Esophagus muscularis mucosa (tissue), 4 donors: ENCODE measurements at regions of chr3 and their contacts with region 1.

Region 1: DNA sequence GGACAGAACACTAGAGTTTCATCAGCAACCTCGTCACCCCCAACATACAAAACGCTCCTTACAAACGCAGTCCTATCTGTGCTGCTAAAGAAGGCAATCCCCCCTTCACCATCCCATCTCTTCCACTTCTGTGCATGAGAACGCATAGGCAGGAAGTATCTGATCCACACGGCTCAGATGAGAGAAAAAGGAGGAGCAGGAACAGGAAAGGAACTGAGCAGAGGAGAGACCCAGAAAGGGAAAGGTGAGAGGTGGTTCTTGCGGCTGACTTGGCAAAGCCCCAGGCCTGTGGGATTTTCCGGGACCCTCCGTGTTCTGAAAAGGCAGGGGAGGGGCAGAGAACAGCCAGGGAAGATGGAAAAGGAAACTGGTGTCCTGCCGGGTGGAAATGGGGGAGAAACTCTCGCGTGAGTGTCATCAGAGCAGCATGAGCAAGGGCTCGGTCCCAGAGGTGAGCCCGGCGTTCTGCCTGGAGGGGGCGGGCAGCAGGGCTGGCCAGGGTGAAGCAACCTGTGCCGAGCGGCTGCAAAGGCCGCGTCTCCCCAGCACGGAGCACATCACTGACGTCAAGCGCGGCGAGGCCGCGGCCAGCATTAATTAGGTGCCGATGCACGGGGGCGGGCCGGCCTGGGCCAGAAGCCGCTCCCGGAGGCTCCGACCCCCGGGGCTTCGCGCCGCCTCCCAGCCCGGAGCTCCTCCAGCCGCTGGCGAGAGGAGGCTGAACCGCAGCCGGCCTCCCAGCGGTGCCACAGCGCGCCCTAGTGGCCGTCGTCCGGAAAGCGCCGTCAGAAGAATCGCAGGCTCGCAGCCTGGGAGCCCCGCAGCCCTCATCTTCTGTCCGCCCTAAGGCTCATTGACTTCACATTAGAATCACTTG is 35.8 kb downstream of the CPN2 start:
- DNase-seq: peak; percentile 96
- H3K4me3 ChIP-seq: peak overlapping the region; percentile 50 to 62 (median 52)
- H3K27ac ChIP-seq: peak overlapping the region; percentile 39 to 76 (median 61)
- H3K4me1 ChIP-seq: peaks cover 30 to 63% (median 58%) of the 10 kb centered on the region in 4 donors
- H3K27me3 ChIP-seq: peaks cover 0 to 10% (median 0%) of the 10 kb centered on the region in 4 donors
- CTCF ChIP-seq: peak; percentile 91 to 97 (median 96)
- EP300 ChIP-seq: no peak
- POLR2A ChIP-seq: no peak

Region 2: GRCh38 chr3:193780810-193781472 is 534.4 kb before region 1 on chr3:
- intact Hi-C with region 1: loop called (anchors 2 kb)
- DNase-seq: no peak
- H3K4me3 ChIP-seq: no peak overlapping the region
- H3K27ac ChIP-seq: peak overlapping the region in 3 of 4 donors; percentile 34 to 49 (median 49)
- H3K4me1 ChIP-seq: peaks cover 8 to 15% (median 11%) of the 10 kb centered on the region in 4 donors
- H3K27me3 ChIP-seq: peaks cover 0 to 25% (median 0%) of the 10 kb centered on the region in 4 donors
- CTCF ChIP-seq: peak; percentile 79 to 86 (median 85)
- EP300 ChIP-seq: no peak
- POLR2A ChIP-seq: no peak

Region 3: DNA sequence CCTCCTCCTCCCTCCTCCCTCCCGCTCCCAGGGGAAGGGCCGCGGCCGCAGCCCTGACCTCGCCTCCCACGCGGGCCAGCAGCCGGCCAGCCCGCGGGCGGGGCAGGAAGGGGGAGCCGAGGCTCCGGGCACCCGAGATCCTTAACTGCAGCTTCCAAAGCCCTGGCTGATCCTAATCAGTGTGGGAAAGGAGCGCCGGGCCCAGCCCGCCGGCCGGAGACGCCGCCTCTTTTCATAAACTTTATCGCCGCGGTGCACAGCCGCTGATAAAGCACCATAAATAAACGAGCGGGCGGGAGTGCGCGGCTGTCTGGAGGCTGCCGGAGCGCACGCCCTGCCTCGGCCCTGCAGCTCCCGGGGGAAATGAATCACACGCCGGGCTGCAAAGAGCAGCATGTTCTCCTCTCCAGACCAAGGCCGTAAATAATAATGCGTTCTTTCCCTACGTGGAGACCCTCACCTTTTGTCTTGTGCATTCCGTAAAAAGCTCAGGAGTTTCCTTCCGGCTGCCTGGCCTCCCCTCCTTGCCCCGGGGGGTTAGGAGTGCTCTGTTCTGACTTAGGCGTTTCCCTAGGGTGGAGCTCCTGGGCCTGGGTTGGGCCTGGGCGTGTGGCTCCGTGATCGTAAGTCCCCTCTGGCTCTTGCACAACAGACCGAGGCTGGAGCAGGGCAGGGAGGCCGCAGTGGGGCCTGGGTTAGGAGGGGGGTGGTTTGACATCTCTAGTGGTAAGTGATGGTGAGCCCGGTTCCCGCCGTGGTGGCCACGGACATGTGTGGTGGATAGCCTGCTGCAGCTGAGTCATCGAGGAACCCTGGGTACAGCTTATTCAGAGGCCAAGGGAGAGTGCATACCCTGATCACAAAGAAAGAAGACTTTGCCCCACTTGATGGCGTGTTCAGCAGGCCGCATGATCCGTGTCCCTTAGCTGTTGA is 311.9 kb before region 1 on chr3:
- intact Hi-C with region 1: loop called (anchors 10 kb)
- DNase-seq: peak; percentile 97
- H3K4me3 ChIP-seq: peak overlapping the region; percentile 54 to 58 (median 56)
- H3K27ac ChIP-seq: peak overlapping the region; percentile 75 to 82 (median 76)
- H3K4me1 ChIP-seq: peaks cover 23 to 38% (median 32%) of the 10 kb centered on the region in 4 donors
- H3K27me3 ChIP-seq: no peaks in the 10 kb centered on the region
- CTCF ChIP-seq: no peak
- EP300 ChIP-seq: no peak
- POLR2A ChIP-seq: no peak

Region 4: GRCh38 chr3:194141415-194142155 is 173.7 kb before region 1 on chr3:
- intact Hi-C with region 1: loop called (anchors 2 kb)
- DNase-seq: peak; percentile 96
- H3K4me3 ChIP-seq: peak overlapping the region; percentile 46 to 55 (median 50)
- H3K27ac ChIP-seq: peak overlapping the region; percentile 93 to 98 (median 96)
- H3K4me1 ChIP-seq: peaks cover 39 to 78% (median 70%) of the 10 kb centered on the region in 4 donors
- H3K27me3 ChIP-seq: no peaks in the 10 kb centered on the region
- CTCF ChIP-seq: no peak
- EP300 ChIP-seq: peak; percentile 33
- POLR2A ChIP-seq: no peak

Region 5: DNA sequence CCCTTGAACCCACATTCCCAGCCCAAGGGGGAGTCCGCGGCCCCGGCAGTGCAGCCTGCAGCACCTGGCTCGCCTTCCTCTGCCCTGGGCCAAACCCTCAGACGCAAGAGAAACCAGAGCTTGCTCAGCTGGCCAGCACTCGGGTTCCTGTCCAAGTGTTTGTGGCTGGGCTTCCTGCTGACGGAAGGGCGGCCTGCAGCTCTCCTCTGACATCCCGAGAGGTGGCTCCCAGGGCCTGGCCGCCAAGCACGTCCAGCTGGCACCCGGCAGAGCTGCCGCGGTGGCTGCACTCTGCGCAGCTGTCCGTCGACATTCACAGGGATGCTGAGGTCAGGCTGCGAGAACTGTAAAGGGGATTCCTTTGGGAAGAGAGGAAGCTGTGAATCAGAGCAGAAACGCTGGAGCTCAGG is 49.8 kb before region 1 on chr3:
- intact Hi-C with region 1: loop called (anchors 5 kb)
- DNase-seq: no peak
- H3K4me3 ChIP-seq: peak overlapping the region in 2 of 4 donors; percentile 10 to 18
- H3K27ac ChIP-seq: peak overlapping the region; percentile 56 to 80 (median 64)
- H3K4me1 ChIP-seq: peaks cover 48 to 58% (median 56%) of the 10 kb centered on the region in 4 donors
- H3K27me3 ChIP-seq: no peaks in the 10 kb centered on the region
- CTCF ChIP-seq: no peak
- EP300 ChIP-seq: no peak
- POLR2A ChIP-seq: no peak

Region 6: DNA sequence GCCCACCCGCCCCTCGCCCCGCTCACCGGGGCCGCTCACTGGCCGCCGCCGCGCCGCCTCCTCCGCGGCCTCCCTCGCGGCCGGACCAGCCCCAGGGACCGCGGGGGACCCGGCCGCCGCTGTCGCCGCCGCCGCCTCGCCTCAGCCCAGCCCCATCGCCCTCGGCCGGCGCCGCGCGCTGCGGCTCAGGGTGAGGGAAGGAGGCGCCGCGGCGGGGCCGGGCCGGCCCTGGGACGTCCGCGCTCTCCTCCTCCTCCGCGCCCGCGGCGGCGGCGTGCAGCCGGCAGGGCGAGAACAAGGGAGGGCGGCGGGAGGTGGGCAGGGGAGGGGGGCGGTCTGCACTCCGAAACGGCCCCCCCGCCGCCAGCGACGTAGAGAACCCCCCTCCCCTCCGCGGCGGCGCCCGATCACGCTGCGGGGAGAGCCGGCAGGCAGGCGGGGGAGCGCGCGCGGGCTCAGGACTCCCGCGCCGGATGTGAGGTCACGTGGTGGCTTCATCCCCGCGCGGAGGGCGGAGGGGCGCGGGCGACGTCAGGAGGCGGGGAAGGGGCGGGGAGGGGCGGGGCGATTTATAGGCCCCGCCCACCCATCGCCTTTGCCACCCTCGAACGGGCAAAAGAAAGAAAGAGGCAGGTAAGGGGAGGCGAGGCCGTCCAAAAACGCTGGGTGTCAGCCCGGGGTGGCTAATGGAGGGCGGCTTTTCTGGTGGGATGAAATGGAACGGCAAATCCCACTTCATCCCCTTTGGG is 171.4 kb after region 1 on chr3 and contains the start of gene ATP13A3:
- intact Hi-C with region 1: no loop called
- DNase-seq: peak; percentile 96
- H3K4me3 ChIP-seq: peak within 1 kb of the TSS; percentile 79 to 91 (median 82)
- H3K27ac ChIP-seq: peak within 1 kb of the TSS; percentile 90 to 93 (median 92)
- H3K4me1 ChIP-seq: peaks cover 20 to 52% (median 50%) of the 10 kb centered on the region in 4 donors
- H3K27me3 ChIP-seq: no peaks in the 10 kb centered on the region
- CTCF ChIP-seq: no peak
- EP300 ChIP-seq: no peak
- POLR2A ChIP-seq: peak; percentile 87
- total RNA-seq, gene ATP13A3: 74.7 to 167 (median 91.0) TPM